ENCODE measurements at regions of chr6 and their contacts with region 1.

Region 1: DNA sequence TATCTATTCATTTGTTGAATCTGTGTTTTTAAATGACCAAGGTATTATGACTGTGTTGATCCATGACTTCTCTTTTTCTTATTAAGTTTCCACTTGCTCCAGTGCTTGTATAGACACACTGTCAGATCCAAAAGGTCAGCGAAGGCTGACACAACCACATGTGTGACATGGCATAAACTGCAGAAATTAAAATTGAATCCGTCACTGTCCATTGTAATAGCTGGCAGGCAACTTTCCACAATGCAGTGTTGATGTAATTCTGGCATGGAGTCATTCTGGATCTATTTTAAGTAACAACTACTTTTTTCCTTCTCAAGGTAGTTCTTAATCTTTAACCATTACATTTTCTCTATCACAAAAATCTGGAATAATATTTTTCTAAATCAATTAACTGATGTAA is 145.3 kb downstream of the AIG1 start:
- DNase-seq: no peak

Region 2: DNA sequence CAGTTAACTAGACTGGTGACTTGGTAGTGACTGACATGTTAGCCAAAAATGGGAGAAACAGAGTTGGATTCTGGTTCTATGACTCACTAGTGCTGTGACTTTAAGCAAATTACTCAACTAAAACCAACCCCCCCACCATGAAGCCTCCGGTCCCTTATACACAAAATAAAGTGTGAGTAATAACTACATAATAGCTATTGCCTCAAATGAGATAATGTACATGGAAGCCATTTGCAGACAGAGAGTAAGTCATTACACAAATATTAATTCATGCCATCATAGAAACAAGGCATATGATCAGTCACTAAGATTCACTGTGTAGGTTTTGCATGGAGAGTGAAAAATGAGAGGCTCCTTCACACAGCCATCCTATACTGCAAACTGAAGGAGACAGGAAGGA is 372.9 kb before region 1 on chr6:
- intact Hi-C with region 1: loop called in 1 of 2 experiments (anchors 10 kb)
- DNase-seq: no peak

Region 3: DNA sequence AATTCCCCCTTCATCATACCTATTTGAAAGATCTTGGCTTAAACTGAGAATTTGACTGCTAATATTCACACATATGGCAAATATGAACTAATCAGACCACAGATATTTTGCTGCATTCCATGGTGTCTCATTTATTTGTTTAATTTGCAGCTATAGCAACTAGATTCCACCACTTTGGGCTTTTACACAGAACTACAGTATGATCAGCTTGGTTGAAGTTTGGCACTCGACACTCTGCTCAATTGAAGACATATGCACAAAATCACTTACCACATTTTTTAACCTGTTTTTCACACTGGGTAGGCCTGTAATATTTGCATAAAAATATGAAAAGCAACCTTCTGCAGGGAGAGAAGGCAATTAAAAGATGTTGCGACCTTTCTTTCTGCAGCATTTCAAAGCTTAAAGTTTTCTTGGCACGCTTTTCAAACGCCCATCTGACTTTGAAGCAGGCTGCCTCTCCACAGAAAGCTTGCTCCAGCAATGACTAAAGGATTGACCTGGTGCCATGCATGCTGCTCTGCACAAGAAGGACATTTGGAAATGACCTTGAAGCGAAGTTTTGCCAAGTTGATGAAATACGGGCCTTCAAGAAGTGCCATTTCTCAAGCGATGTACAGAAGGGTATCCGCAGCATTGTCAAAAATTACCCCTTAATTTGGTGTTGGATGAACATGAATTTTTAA is 18.6 kb before region 1 on chr6:
- intact Hi-C with region 1: loop called in 1 of 2 experiments (anchors 1 kb)
- DNase-seq: no peak